AG04450 (cell line): ENCODE measurements at regions of chr2 and their contacts with region 1.

Region 1: GRCh38 chr2:18378020-18378653 is 182.3 kb downstream of the RDH14 start:
- DNase-seq: no peak
- H3K4me3 ChIP-seq: no peak overlapping the region
- H3K27ac ChIP-seq: no peak overlapping the region
- H3K27me3 ChIP-seq: no peaks in the 10 kb centered on the region
- CTCF ChIP-seq: peak; percentile 87

Region 2: DNA sequence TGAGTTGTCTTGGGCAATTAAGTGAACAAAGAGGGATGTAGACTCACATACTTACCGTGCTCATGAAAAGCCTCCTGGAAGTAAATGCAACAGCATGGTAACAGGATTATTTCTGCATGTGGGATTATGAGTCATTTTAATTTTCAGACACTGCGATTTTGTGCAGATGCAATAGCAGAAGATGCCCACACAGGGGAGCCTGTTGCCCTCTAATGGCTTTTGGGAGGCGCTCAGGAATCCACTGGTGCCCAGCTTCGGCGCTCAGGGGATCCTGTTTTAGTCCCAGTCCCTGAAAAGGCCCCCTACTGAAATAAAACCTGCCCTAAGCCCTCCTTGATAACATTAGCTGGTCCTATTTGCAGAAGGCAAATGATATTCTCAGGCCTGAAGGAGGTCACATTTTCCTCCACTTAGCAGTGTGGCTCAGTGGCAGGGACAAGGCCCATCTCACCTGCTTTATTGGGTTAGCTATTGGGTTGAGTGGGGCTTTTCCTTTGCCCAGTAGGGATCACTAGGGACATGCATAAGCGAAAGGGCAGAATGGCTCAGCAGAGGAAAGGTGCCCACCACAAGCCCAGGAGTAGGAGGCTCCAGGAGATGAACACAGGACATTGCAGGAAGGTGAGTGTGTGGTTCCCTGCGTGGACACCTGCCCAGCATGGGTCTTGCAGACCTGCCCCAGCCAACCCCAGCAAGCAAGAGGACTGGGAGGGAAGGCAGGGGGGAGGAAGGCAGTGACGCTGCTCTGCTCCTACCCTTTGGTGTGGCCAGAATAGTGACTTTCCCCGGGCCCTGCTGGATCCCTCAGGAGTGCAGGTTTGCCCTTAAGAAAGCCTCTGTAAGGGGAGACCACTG is 526.2 kb before region 1 on chr2:
- CTCF ChIA-PET with region 1: interaction called, 24 read pairs
- POLR2A ChIA-PET with region 1: no interaction called
- DNase-seq: peak; percentile 34
- H3K4me3 ChIP-seq: no peak overlapping the region
- H3K27ac ChIP-seq: no peak overlapping the region
- H3K27me3 ChIP-seq: no peaks in the 10 kb centered on the region
- CTCF ChIP-seq: peak; percentile 95

Region 3: DNA sequence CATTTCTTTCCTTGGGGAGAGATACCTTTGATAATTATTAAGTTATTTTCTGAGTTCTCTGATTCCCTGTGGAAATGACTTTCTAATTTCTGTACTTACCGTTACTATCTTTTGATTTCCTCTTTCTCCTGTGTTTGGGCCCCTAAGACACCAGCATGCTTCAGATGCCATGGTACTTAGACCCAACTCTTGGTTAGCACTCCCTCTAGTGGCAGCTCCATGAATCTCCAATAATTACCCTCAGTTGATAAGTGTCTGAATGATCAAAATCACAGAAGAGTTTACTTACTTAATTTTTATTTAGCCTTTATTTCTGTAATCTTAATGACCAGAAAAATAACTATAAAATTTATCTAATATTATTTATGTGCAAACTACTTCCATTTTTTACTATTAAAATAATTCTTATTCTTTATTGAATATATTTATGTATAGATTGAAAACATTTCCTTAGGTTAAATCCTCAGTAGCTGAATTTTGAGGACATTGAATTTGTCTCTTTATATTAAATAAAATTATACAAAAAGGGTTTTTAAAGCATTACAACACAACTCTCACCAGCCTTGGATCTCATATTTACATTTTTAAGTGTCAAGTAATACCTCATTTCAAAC is 199.3 kb before region 1 on chr2:
- CTCF ChIA-PET with region 1: interaction called, 20 read pairs
- POLR2A ChIA-PET with region 1: no interaction called
- DNase-seq: peak; percentile 15
- H3K4me3 ChIP-seq: no peak overlapping the region
- H3K27ac ChIP-seq: no peak overlapping the region
- H3K27me3 ChIP-seq: no peaks in the 10 kb centered on the region
- CTCF ChIP-seq: peak; percentile 88

Region 4: GRCh38 chr2:18219676-18220075 is 158.5 kb before region 1 on chr2:
- CTCF ChIA-PET with region 1: interaction called, 27 read pairs
- POLR2A ChIA-PET with region 1: no interaction called
- DNase-seq: no peak
- H3K4me3 ChIP-seq: no peak overlapping the region
- H3K27ac ChIP-seq: no peak overlapping the region
- H3K27me3 ChIP-seq: no peaks in the 10 kb centered on the region
- CTCF ChIP-seq: peak; percentile 29; the same call in 1 of the 2 replicates

Region 5: DNA sequence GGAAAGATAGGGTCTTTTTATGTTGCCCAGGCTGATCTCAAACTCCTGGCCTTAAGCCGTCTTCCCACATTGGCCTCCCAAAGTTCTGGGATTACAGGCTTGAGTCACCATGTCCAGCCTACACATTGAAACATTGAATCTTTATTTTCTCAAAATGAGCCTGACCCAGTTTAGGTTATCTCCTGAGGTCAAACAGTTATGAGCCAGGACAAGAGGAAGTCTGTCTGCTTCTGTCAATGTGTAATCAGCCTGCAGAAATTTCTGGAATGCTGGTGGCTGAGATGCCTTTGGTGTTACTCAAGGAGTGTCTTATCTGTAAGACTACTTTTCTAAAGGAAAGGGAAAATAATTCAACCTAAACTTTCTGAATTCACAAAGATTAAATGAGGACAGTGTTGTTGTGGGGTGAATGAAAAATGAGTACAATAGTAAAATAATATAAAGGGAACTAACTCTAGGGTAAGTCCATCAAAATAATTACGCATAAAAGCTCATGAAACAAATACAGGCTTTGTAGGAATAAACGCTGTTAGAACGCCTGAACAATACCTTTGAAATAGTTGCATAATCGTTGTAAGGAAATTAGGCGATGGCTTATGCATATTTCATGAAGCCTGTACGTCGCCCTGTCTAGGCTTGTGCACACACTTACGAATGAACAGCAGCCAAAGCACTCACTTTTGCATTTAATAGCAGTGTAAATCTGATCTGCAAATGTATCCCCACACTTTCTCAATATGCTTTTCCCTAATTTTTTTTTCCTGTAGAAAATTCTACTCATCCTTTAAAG is 78.5 kb before region 1 on chr2:
- CTCF ChIA-PET with region 1: interaction called, 10 read pairs
- POLR2A ChIA-PET with region 1: no interaction called
- DNase-seq: peak; percentile 68
- H3K4me3 ChIP-seq: no peak overlapping the region
- H3K27ac ChIP-seq: no peak overlapping the region
- H3K27me3 ChIP-seq: no peaks in the 10 kb centered on the region
- CTCF ChIP-seq: no peak